Posterior cingulate gyrus (tissue), 11 donors: ENCODE measurements at regions of chr11 and their contacts with region 1.

Region 1: GRCh38 chr11:74170694-74171629 is at the starts of genes C2CD3 and PPME1:
- DNase-seq: peak; percentile 97 to 100 (median 98)

Region 2: GRCh38 chr11:73982969-73983740 is 187.8 kb before region 1 on chr11:
- intact Hi-C with region 1: loop called (anchors 5 kb)
- DNase-seq: peak; percentile 86 to 99 (median 93)